Aorta (tissue), 5 donors: ENCODE measurements at regions of chr16 and their contacts with region 1.

Region 1: DNA sequence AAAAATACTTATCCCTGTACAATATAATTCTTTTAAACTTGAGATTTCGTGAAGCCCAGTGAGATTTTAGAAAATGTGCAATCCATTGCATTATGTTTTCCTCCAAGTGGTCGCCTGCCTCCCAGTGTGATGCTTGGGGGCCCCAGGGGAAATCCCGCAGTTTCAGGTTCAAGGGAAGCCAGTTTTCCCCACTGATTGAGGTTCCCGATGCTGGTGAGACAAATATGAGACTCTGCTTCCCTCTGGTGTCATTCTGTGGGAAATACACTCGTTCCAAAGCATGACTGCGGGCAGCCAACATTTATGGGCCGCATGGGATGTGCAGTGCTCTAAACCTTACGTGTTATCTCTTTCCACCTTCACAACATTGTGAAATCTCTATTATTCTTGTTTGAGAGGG is 200.8 kb downstream of the PRKCB start:
- DNase-seq: no peak
- ATAC-seq: no peak
- H3K4me3 ChIP-seq: no peak overlapping the region
- H3K27ac ChIP-seq: no peak overlapping the region
- H3K4me1 ChIP-seq: no peaks in the 10 kb centered on the region
- H3K27me3 ChIP-seq: no peaks in the 10 kb centered on the region

Region 2: GRCh38 chr16:22232277-22233042 is 1804.2 kb before region 1 on chr16:
- intact Hi-C with region 1: no loop called
- DNase-seq: no peak
- ATAC-seq: no peak
- H3K4me3 ChIP-seq: no peak overlapping the region
- H3K27ac ChIP-seq: peak overlapping the region in 1 of 2 donors; percentile 17
- H3K4me1 ChIP-seq: no peaks in the 10 kb centered on the region
- H3K27me3 ChIP-seq: no peaks in the 10 kb centered on the region

Region 3: DNA sequence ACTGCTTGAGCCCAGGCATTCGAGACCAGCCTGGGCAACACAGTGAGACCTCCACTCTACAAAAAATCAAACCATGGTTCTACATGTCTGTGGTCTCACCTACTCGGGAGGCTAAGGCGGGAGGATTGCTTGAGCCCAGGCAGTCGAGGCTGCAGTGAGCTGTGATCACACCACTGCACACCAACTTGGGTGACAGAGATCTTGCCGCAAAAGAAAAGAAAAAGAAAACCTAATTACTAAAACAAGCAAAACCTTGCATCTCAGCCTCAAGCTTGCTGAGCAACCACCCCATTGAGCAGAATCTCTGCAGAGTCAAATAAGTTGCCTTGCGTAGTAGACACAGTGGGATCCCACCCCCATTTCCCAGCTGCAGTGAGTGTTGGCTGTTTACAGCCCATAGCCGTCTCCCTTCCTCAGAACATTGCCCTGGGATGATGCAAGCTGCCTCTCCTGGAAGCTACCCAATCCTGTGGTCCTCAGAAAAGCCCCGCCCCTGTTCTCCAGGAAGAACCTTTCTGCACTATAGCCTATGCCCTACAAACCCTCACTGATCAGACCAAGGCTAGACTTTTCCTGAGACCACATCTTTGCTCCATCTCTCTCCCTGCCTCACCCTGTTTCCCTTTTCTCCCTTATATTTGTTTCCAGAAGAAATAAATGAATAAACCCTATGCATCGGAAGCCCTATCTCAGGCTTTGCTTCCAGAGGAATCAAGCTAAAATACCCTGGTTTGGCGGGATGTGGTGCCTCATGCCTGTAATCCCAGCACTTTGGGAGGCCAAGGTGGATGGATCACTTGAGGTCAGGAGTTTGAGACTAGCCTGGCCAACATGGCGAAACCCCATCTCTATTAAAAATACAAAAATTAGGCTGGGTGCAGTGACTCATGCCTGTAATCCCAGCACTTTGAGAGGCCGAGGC is 306.9 kb before region 1 on chr16:
- intact Hi-C with region 1: loop called in 1 of 2 experiments (anchors 10 kb)
- DNase-seq: no peak
- ATAC-seq: no peak
- H3K4me3 ChIP-seq: no peak overlapping the region
- H3K27ac ChIP-seq: no peak overlapping the region
- H3K4me1 ChIP-seq: no peaks in the 10 kb centered on the region
- H3K27me3 ChIP-seq: no peaks in the 10 kb centered on the region

Region 4: DNA sequence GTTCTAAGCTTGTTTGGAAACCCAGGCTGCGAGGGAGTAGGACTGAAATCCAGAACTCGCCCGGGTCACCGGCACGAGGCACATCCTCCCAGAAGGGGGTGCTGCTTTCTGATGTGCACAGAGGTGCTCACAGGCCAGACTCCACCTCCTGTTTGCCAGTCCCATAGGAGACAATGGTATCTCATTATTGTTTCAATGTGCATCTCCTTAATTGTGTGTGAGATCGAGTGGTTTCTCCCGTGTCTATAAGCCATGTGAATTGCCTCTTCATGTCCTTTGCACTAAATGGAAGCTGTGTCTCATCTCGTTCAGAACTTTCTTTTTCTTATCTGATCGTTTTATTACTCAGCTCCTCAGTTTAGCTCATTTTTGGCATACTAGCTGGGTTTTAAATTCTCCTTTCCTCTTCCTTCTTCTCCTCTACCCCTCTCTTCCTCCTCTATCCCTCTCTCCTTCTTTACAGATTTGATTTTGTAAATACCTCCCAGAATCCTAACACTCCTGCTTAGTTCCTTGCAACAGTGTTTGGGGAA is 233.0 kb before region 1 on chr16:
- intact Hi-C with region 1: loop called in 1 of 2 experiments (anchors 5 kb)
- DNase-seq: peak in 1 of 2 donors; percentile 59
- ATAC-seq: no peak
- H3K4me3 ChIP-seq: no peak overlapping the region
- H3K27ac ChIP-seq: no peak overlapping the region
- H3K4me1 ChIP-seq: no peaks in the 10 kb centered on the region
- H3K27me3 ChIP-seq: no peaks in the 10 kb centered on the region

Region 5: GRCh38 chr16:24198807-24199533 is 162.4 kb after region 1 on chr16:
- intact Hi-C with region 1: no loop called
- DNase-seq: no peak
- ATAC-seq: no peak
- H3K4me3 ChIP-seq: no peak overlapping the region
- H3K27ac ChIP-seq: no peak overlapping the region
- H3K4me1 ChIP-seq: no peaks in the 10 kb centered on the region
- H3K27me3 ChIP-seq: no peaks in the 10 kb centered on the region